GM12878 (cell line): ENCODE measurements at regions of chr11 and their contacts with region 1.

Region 1: GRCh38 chr11:18243783-18244362 is 4.6 kb downstream of the SAA2 start:
- DNase-seq: peak; percentile 54
- ATAC-seq: peak; percentile 38
- H3K4me3 ChIP-seq: no peak overlapping the region
- H3K27ac ChIP-seq: peak overlapping the region; percentile 12; the same call in 1 of the 2 replicates
- H3K4me1 ChIP-seq: peaks cover 20% of the 10 kb centered on the region
- H3K27me3 ChIP-seq: no peaks in the 10 kb centered on the region
- CTCF ChIP-seq: peak; percentile 85 to 94 (median 89)
- EP300 ChIP-seq: no peak
- POLR2A ChIP-seq: no peak
- RAD21 ChIP-seq: peak; percentile 93

Region 2: DNA sequence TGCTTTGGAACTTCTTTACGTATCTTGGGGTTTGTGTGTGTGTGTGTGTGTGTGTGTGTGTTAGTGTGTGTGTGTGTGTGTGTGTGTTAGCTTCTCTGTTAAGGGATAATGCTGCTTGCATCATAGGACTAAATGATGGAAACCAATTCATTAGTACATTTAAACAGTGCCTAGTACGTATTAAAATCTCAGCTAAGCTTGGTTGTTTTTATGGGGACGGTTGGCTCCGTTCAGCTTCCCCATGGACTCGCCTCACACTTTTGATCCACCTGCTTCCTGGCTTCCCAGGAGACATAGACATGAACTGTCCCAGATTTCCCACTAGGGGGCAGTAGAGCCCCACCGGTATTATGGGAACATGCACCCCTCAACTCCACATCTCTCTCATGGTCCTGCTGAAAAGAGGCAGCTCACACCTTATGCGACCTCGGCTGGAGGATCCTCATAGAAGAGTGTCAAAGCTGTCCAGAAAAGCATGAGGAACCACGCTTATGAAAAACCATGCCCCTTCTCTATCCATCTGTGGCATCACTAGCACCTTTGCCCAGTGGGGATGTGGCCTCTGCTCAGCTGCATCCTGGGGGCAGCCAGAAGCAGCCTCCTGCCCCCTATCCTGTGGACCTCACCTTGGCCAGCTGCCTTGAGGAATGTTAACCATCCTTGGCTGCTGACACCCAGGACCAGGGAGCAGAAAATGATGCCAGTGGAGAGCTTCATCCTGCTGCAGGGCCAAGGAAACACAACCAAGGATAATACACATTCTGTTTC is 128.3 kb before region 1 on chr11:
- CTCF ChIA-PET with region 1: interaction called, 17 read pairs
- POLR2A ChIA-PET with region 1: no interaction called
- RAD21 ChIA-PET with region 1: interaction called, 6 read pairs
- SMC1A ChIA-PET with region 1: interaction called, 8 read pairs
- in situ Hi-C with region 1: no loop called
- intact Hi-C with region 1: no loop called
- DNase-seq: peak; percentile 19
- ATAC-seq: peak; percentile 97
- H3K4me3 ChIP-seq: no peak overlapping the region
- H3K27ac ChIP-seq: no peak overlapping the region
- H3K4me1 ChIP-seq: no peaks in the 10 kb centered on the region
- H3K27me3 ChIP-seq: peaks cover 0 to 1% of the 10 kb centered on the region in 2 experiments; a peak in 2 of 4 replicates
- CTCF ChIP-seq: peak; percentile 85 to 91 (median 87); a peak in 5 of 6 replicates
- EP300 ChIP-seq: no peak
- POLR2A ChIP-seq: no peak
- RAD21 ChIP-seq: peak; percentile 92

Region 3: DNA sequence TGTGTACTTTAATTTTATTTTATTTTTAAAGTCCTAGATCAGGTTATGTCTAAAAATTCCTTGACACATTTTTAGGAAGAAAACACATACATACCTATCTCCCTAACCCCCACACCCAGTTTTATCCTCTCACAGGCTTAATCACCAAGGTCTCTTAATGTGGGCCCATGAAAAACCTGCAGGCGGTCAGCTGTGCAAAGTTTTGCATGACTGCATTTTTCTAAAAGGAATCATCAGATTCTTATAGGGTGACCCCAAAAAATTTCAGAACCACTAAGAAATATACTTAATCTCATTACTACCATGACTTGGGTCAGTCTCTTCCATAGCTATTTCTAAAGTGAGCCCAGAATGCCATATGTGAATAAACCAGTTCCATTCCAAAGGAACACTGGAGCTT is 42.0 kb after region 1 on chr11:
- CTCF ChIA-PET with region 1: interaction called, 15 read pairs
- POLR2A ChIA-PET with region 1: no interaction called
- RAD21 ChIA-PET with region 1: interaction called, 9 read pairs
- SMC1A ChIA-PET with region 1: interaction called, 17 read pairs
- in situ Hi-C with region 1: no loop called
- intact Hi-C with region 1: no loop called
- DNase-seq: no peak
- ATAC-seq: no peak
- H3K4me3 ChIP-seq: no peak overlapping the region
- H3K27ac ChIP-seq: no peak overlapping the region
- H3K4me1 ChIP-seq: no peaks in the 10 kb centered on the region
- H3K27me3 ChIP-seq: no peaks in the 10 kb centered on the region
- CTCF ChIP-seq: no peak
- EP300 ChIP-seq: no peak
- POLR2A ChIP-seq: no peak
- RAD21 ChIP-seq: no peak

Region 4: DNA sequence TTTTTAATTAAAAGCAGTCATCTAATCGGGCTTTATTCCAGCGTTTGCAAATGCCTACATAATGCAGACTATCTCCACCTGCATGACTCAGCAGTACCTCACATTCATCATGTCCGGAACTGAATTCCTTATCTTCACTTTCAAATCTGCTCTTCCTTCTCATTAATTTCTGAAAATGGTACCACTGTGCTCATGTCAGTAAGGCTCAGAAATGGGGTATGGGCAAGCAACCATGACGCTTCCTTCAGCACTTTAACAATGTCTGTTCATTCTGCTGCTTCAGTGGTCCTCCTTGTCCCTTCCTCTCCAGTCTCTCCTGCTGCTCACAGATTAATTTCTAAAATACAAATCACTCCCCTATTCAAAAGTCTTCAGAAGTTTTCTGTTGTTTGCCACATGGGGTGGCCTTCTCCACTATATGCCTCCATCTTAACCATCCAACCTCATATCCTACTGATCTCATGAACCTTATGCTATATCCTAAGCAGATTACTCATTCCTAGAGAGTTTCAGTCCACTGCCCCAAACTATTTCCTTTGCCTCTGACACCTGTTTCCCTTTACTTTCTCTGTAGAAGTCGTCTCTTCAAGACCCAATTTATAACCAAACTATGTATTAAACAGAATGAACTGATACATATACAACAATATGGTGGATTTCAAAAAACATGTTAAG is 85.5 kb after region 1 on chr11:
- CTCF ChIA-PET with region 1: interaction called, 12 read pairs
- POLR2A ChIA-PET with region 1: no interaction called
- RAD21 ChIA-PET with region 1: interaction called, 5 read pairs
- SMC1A ChIA-PET with region 1: interaction called, 9 read pairs
- in situ Hi-C with region 1: no loop called
- intact Hi-C with region 1: no loop called
- DNase-seq: no peak
- ATAC-seq: peak; percentile 76
- H3K4me3 ChIP-seq: no peak overlapping the region
- H3K27ac ChIP-seq: peak overlapping the region; percentile 71
- H3K4me1 ChIP-seq: peaks cover 31% of the 10 kb centered on the region
- H3K27me3 ChIP-seq: no peaks in the 10 kb centered on the region
- CTCF ChIP-seq: no peak
- EP300 ChIP-seq: no peak
- POLR2A ChIP-seq: no peak
- RAD21 ChIP-seq: no peak

Region 5: DNA sequence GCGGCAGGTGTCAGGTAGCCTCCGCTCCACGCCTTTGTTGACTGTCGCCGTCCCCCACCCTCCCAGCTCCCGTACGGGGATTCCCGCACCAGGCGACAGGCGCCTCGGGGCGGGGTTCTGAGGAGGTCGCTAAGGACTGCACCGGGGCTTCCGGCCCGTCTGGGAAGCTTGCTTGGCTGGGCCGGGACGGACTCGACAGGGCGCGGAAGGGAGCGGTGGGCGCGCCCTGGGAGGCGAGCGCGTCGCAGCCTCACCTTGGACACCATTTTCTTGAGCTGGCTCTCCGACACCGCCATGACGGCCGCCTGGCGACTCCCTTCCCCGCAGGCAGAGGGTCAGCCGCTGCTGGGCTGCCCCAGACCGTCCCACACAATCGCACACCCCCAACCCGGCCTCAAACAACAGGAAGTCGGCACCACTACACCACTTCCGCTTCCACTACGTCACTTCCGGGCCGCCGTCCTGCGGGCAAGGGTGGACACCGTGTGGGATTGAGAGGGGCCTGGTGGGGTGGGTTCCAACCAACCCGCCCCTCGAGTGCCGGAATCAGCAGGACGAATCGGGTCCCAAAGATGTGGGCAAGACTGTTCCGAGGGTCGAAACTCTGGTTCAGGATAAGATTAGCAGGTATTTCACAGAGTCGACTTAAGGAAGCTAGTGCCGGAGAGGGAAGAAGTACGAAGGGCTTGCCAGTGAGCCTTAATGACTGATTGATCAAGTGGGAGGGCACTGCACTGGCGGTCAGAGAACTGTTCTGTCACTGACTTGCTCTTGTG is 282.8 kb after region 1 on chr11 and contains the start of gene TSG101:
- CTCF ChIA-PET with region 1: interaction called, 18 read pairs
- POLR2A ChIA-PET with region 1: interaction called, 3 read pairs
- RAD21 ChIA-PET with region 1: interaction called, 8 read pairs
- SMC1A ChIA-PET with region 1: interaction called, 14 read pairs
- in situ Hi-C with region 1: no loop called
- intact Hi-C with region 1: loop called (anchors 10 kb)
- DNase-seq: peak; percentile 69
- ATAC-seq: peak; percentile 91
- H3K4me3 ChIP-seq: peak within 1 kb of the TSS; percentile 95
- H3K27ac ChIP-seq: peak within 1 kb of the TSS; percentile 91
- H3K4me1 ChIP-seq: no peaks in the 10 kb centered on the region; the same call in 1 of the 2 replicates
- H3K27me3 ChIP-seq: no peaks in the 10 kb centered on the region
- CTCF ChIP-seq: no peak
- EP300 ChIP-seq: peak in 1 of 2 experiments; percentile 15; a peak in 1 of 4 replicates
- POLR2A ChIP-seq: peak; percentile 98
- RAD21 ChIP-seq: no peak
- polyA plus RNA-seq, gene TSG101: 22.3 to 37.6 TPM

Region 6: GRCh38 chr11:18721561-18722292 is 477.9 kb after region 1 on chr11:
- CTCF ChIA-PET with region 1: interaction called, 8 read pairs
- POLR2A ChIA-PET with region 1: no interaction called
- RAD21 ChIA-PET with region 1: interaction called, 5 read pairs
- SMC1A ChIA-PET with region 1: no interaction called
- in situ Hi-C with region 1: no loop called
- intact Hi-C with region 1: loop called (anchors 10 kb)
- DNase-seq: no peak
- ATAC-seq: peak; percentile 91
- H3K4me3 ChIP-seq: peak overlapping the region; percentile 71
- H3K27ac ChIP-seq: no peak overlapping the region
- H3K4me1 ChIP-seq: peaks cover 9% of the 10 kb centered on the region
- H3K27me3 ChIP-seq: no peaks in the 10 kb centered on the region; a peak in 3 of 4 replicates
- CTCF ChIP-seq: peak; percentile 78 to 92 (median 87)
- EP300 ChIP-seq: no peak
- POLR2A ChIP-seq: no peak
- RAD21 ChIP-seq: peak; percentile 35